Activated CD4-positive, alpha-beta T cell treated with anti-CD3 and anti-CD28 coated beads for 36 hours (primary cell): ENCODE measurements at regions of chr3 and their contacts with region 1.

Region 1: GRCh38 chr3:59759298-59760031 is 709.6 kb upstream of the CFAP20DC start:
- DNase-seq: peak; percentile 81
- ATAC-seq: peak; percentile 78
- H3K4me3 Mint-ChIP-seq: no peak overlapping the region
- H3K27ac Mint-ChIP-seq: peak overlapping the region; percentile 10
- H3K4me1 Mint-ChIP-seq: peaks cover 74% of the 10 kb centered on the region
- H3K27me3 Mint-ChIP-seq: no peaks in the 10 kb centered on the region

Region 2: GRCh38 chr3:59771768-59772181 is 12.3 kb after region 1 on chr3:
- CTCF ChIA-PET with region 1: interaction called, 12 read pairs
- POLR2A ChIA-PET with region 1: no interaction called
- intact Hi-C with region 1: no loop called
- DNase-seq: peak; percentile 10
- ATAC-seq: peak; percentile 40
- H3K4me3 Mint-ChIP-seq: no peak overlapping the region
- H3K27ac Mint-ChIP-seq: no peak overlapping the region
- H3K4me1 Mint-ChIP-seq: peaks cover 39% of the 10 kb centered on the region
- H3K27me3 Mint-ChIP-seq: peaks cover 2% of the 10 kb centered on the region

Region 3: DNA sequence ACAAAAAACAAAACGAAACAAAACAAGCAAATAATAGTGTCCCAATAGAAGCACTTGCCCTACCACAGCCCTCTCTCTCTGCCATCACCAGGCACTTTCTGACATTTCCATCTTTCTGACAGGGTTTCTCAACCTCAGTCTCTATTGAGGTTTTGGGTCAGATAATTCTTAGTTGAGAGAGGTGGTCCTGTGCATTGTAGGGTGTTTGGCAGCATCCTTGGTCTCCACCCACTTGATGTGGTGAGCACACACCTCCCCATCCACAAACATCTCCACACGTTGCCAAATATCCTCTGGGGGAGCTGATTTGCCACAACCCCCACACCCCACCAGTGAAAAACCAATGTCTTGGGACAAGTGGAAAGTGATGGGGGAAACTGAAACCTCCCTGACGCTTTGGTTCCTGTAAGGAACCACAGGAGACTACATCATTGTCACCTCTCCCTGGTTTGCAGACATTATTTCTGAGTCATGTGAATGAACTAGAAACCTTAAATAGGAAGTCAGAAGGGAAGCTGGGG is 24.1 kb after region 1 on chr3:
- CTCF ChIA-PET with region 1: no interaction called
- POLR2A ChIA-PET with region 1: no interaction called
- intact Hi-C with region 1: loop called in 1 of 2 experiments (anchors 2 kb)
- DNase-seq: peak; percentile 54
- ATAC-seq: peak; percentile 89
- H3K4me3 Mint-ChIP-seq: no peak overlapping the region
- H3K27ac Mint-ChIP-seq: no peak overlapping the region
- H3K4me1 Mint-ChIP-seq: peaks cover 27% of the 10 kb centered on the region
- H3K27me3 Mint-ChIP-seq: no peaks in the 10 kb centered on the region